ENCODE measurements at regions of chr1 and their contacts with region 1.

Region 1: DNA sequence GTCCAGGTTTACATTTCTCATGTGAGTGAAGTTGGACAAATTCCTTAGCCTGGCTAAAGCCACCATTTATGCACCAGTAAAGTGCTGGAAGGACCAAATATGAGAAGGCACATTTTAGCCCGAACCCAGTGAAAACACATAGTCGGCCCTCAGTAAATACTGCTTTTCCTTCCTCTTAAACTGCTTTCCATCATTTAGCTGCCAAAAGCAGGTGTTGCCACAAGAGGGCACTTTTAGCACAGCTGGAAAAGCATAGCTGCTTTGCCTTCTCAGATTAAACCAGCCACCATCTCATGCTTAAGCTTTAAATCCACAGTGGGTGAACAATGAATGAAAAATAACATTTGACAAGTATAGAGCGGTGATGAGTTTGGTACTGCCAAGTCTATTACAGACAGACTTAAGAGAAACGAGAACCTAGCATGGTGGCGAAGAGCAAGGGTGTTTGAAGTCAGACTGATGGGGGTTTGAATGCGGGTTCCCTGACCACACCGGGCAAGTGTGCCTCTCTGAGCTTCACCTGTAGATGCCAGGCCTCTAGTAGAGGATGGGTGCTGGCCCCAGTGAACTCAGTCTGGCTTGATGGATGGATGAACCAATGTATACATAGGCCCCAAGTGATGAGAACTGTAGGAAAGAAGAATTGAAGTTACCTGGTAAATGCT is 57.8 kb downstream of the SLC35D1 start:
- DNase-seq: peak in 1 of 2 donors; percentile 57
- ATAC-seq: peak; percentile 85
- H3K4me3 ChIP-seq: no peak overlapping the region
- H3K27ac ChIP-seq: no peak overlapping the region
- H3K4me1 ChIP-seq: peaks cover 0 to 3% of the 10 kb centered on the region in 2 donors
- H3K27me3 ChIP-seq: no peaks in the 10 kb centered on the region

Region 2: DNA sequence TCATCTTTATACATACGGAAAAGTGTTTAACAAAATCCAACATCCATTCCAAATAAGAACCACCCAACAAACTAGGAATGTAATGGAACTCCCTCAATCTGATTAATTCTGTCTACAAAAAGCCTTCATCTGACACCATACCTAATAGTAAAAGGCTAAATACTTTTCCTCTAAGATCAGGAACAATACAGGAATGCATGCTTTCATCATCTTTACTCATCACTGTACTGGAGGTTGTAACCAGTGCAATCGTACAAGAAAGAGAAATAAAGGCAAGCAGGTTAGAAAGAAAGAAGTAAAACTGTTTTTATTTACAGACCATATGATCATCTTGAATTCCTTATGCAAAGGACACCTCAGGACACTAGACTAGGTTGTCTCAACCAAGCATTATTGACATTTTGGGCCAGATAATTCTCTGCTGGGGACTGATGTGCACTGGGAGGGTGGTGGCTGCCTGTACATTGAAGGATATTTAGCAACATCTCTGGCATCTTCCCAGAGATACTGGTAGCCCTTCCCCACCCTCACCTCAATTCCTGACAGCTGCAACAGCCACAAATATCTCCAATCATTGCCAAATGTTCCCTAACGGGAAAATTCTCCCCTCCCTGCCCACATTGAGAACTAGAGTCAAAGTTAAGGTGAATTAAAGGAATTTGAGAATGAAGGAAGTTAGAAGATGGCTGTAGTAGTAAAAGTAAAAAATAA is 164.5 kb before region 1 on chr1:
- intact Hi-C with region 1: no loop called
- DNase-seq: no peak
- ATAC-seq: no peak
- H3K4me3 ChIP-seq: no peak overlapping the region
- H3K27ac ChIP-seq: no peak overlapping the region
- H3K4me1 ChIP-seq: no peaks in the 10 kb centered on the region
- H3K27me3 ChIP-seq: no peaks in the 10 kb centered on the region

Region 3: GRCh38 chr1:66954208-66954607 is 41.9 kb before region 1 on chr1:
- intact Hi-C with region 1: no loop called
- DNase-seq: no peak
- ATAC-seq: no peak
- H3K4me3 ChIP-seq: no peak overlapping the region
- H3K27ac ChIP-seq: no peak overlapping the region
- H3K4me1 ChIP-seq: no peaks in the 10 kb centered on the region
- H3K27me3 ChIP-seq: no peaks in the 10 kb centered on the region

Region 4: DNA sequence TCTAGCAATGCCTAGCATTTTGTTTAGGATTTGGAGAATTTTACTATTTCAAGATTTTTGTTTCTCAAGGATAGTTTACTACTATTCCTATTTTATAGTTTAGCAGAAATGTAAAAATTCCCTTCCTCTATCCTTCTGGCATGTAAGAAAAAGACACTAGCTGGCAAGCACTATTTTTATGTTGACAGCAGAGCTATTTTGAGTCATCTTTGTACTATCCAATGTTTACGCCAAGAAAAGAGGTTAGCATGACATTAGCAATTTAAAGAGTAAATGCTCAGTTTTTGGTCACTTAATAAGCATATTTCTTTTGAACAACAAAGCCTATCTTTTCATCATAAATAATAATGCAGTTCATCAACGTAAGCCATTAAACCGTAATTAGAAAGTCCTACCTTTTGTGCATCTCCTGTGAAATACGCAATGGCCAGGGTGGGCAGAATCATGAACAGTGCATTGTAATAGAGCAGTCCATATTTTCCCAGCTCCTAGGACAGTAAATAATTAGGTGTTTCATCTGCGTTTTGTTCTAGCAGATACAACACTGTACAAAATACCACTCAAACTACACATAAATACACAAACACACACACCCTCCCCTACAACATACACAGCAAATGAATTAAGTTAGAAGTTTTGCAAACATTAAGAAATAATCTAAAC is 45.8 kb after region 1 on chr1:
- intact Hi-C with region 1: no loop called
- DNase-seq: no peak
- ATAC-seq: no peak
- H3K4me3 ChIP-seq: no peak overlapping the region
- H3K27ac ChIP-seq: no peak overlapping the region
- H3K4me1 ChIP-seq: no peaks in the 10 kb centered on the region
- H3K27me3 ChIP-seq: no peaks in the 10 kb centered on the region

Region 5: GRCh38 chr1:67149179-67149770 is 153.1 kb after region 1 on chr1:
- intact Hi-C with region 1: loop called (anchors 1 kb)
- DNase-seq: peak in 1 of 2 donors; percentile 68
- ATAC-seq: peak; percentile 88
- H3K4me3 ChIP-seq: no peak overlapping the region
- H3K27ac ChIP-seq: no peak overlapping the region
- H3K4me1 ChIP-seq: no peaks in the 10 kb centered on the region
- H3K27me3 ChIP-seq: no peaks in the 10 kb centered on the region

Measured in aorta (tissue), 5 donors.